ENCODE measurements at regions of chr11 and their contacts with region 1.

Region 1: DNA sequence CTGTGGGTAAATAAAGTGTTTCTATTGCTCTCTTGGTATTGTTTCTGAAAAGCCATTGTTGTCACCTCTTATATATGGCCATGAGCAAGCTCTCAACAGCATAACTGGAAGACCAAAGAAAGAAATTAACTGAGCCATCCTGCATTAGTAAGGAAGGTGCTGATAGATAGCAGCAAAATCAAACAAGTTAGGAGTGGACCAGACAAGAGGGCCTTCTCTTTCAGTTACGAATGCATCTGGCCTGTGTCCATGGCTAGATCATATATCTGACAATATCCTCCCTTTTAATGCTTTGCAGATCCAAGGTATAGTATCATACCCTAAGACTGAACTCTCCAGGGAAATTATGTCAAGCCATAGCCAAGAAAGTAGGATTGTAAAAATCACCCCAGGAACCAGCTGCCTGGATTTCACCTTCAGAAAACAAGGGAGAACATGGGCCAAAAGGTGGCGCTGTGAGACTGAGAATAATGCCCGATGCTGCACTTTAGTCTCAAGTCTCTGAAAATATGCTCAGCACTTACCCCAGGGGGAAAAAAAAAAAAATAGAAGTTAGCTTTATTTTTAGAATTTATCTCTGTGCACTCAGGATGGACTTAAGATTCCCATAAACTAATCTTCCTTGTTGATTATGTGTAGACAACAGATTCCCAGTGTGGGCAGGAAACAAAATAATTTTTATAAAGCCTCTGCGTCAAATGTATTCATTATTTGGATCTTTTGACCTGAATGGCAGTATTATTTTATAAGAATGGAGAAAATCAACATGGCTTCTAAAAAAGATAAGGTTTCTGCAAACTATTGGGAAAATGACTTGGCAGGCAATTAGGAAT is 415.1 kb downstream of the ETS1 start:
- DNase-seq: peak; percentile 91
- ATAC-seq: peak; percentile 93
- H3K4me3 Mint-ChIP-seq: no peak overlapping the region
- H3K27ac Mint-ChIP-seq: no peak overlapping the region
- H3K4me1 Mint-ChIP-seq: peaks cover 9% of the 10 kb centered on the region
- H3K27me3 Mint-ChIP-seq: no peaks in the 10 kb centered on the region

Region 2: DNA sequence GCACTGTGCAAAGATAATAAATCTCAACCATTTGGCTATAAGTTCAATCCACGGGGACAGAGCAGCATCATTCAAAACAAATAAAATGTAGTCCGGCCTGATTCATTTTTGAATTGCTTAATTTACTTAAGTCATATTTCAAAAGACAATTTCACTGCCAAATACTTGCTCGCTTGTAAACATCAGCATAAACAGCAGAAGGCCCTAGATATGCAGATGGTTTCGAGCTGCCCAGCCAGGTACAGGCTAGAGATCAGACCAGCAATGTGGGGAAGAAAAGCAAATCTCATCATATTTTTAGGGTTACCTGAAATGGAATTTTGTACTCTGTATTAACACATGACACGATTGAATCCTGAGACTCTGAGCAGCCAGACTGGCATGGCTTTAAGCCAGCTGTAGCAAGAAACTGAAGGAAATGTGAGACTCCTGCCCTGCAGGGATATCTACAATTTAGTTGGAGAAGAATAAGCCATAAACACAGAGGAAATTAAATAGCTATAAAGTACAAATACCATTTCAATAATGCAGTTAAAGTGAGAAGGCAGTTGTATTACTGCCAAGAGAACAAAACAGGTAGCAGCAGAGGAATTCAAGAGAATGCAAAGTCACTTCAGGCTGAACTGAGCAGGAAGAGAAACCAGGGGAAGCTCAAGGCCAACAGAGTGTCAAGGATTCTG is 25.2 kb before region 1 on chr11:
- CTCF ChIA-PET with region 1: interaction called, 11 read pairs
- DNase-seq: no peak
- ATAC-seq: no peak
- H3K4me3 Mint-ChIP-seq: no peak overlapping the region
- H3K27ac Mint-ChIP-seq: no peak overlapping the region
- H3K4me1 Mint-ChIP-seq: no peaks in the 10 kb centered on the region
- H3K27me3 Mint-ChIP-seq: no peaks in the 10 kb centered on the region

Region 3: DNA sequence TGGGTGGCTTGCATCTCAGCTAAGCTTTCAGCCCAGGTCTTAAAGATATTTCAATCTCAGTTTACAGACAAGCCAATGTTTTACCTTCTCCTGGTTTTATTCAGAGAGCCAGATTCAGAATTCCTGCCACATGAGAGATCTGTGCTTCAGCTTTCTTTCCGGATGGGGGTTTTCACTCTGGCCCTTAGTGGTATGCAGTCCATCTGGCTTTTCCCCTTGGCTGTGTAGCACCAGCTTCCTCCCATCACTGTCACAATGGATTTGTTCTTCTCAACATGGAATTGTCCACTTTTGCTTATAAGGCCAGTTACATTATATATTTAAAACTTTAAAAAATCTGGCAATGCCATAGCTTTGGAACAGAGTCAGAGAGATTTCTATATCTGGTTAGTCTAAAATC is 111.2 kb after region 1 on chr11:
- CTCF ChIA-PET with region 1: interaction called, 17 read pairs
- DNase-seq: no peak
- ATAC-seq: no peak
- H3K4me3 Mint-ChIP-seq: no peak overlapping the region
- H3K27ac Mint-ChIP-seq: no peak overlapping the region
- H3K4me1 Mint-ChIP-seq: peaks cover 32% of the 10 kb centered on the region
- H3K27me3 Mint-ChIP-seq: peaks cover 5% of the 10 kb centered on the region

Region 4: DNA sequence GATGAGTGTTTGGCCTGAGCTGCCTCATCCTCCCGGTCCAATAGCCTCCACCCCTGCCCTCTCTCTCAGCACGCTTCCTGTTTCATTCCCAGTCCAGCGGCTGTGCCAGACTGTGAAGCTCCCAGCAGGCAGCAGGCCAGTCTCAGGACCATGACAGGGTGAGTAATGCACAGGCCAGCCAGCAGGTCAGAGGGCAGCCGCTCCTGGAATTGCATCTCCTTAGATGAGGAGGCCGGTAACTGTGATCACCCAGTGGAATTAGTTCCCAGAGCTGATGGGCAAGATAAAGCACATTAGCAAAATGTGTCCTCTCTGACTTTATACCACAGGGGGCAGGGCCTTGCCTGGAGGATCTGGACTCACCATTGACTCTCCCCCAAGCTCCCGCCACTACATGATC is 163.9 kb after region 1 on chr11:
- CTCF ChIA-PET with region 1: no interaction called
- DNase-seq: no peak
- ATAC-seq: no peak
- H3K4me3 Mint-ChIP-seq: no peak overlapping the region
- H3K27ac Mint-ChIP-seq: no peak overlapping the region
- H3K4me1 Mint-ChIP-seq: peaks cover 35% of the 10 kb centered on the region
- H3K27me3 Mint-ChIP-seq: no peaks in the 10 kb centered on the region

Region 5: DNA sequence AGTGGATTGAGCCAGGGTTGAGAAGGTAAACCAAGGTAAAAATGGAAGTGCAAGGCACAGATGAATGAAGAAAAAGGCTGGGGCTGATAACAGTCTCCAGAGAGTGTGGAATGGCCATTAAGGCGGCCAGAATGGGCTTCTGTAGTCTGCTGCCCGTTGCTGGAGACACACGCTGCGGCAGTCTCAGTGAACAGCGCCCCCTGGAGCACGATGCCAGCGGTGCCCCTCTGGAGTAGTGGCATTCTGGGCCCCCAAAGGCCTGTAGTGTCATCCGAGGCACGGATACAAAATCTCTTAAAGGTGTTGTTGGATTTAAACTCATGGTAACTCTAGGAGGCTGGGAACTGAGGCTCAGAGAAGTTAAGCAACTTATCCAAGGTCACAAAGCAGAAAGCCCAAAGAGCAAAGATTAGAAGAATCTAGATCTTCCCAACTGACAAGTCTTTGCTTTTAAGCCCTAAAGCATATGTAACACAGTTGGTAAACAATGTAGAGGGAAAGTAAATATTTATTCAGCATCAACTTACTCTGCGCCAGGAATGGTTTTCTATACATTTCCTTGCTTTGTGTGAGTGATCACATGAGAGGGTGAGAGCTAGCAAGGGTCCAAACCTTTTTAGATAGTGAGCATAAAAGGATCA is 676.7 kb after region 1 on chr11:
- CTCF ChIA-PET with region 1: interaction called, 11 read pairs
- DNase-seq: peak; percentile 77
- ATAC-seq: peak; percentile 81
- H3K4me3 Mint-ChIP-seq: no peak overlapping the region
- H3K27ac Mint-ChIP-seq: no peak overlapping the region
- H3K4me1 Mint-ChIP-seq: peaks cover 25% of the 10 kb centered on the region
- H3K27me3 Mint-ChIP-seq: no peaks in the 10 kb centered on the region